Esophagus muscularis mucosa (tissue), 4 donors: ENCODE measurements at regions of chr19 and their contacts with region 1.

Region 1: DNA sequence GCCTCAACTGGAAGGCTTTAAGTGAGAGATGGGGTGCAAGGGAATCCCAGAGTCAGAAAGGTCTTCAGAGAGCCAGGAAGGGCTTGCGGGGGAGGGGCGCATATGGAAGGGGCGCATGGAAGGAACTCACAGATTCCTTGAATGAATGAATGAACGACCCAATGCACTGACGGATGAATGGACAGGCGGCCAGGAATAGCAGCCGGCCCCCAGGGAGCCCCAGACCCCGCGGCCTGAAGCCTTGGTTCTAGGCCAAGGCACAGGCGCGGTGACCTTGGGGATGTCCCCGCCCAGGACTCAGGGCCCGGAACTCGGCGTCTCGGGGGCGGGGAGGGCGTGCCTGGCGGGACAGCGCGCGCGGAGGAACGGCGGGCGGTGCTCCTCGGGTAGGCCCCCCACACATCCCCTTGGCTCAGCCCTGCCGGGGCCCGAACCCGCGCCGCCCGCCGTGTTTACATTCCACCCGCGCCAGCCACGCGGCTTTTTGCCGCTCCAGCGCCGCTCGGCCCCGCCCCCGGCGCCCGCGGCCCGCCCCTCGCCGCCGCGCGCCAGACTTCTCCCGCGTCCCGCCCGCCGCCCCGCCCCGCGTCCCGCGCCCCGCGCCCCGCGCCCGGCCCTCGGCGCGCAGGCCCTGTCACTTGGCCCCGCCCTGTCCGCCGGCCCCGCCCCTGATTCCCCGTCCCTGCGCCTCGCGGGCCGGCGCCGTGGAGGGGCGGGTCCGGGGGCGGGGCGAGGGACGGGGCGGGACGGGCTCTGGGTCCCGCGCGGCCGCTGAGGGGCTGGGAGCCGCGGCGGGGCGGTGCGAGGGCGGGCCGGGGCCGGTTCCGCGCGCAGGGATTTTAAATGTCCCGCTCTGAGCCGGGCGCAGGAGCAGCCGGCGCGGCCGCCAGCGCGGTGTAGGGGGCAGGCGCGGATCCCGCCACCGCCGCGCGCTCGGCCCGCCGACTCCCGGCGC is at the start of gene CCNE1:
- DNase-seq: peak; percentile 95
- H3K4me3 ChIP-seq: peak within 1 kb of the TSS; percentile 61 to 82 (median 70)
- H3K27ac ChIP-seq: peak within 1 kb of the TSS; percentile 65 to 80 (median 74)
- H3K4me1 ChIP-seq: peaks cover 0 to 21% (median 16%) of the 10 kb centered on the region in 4 donors
- H3K27me3 ChIP-seq: no peaks in the 10 kb centered on the region
- CTCF ChIP-seq: no peak
- EP300 ChIP-seq: no peak
- POLR2A ChIP-seq: no peak
- total RNA-seq, gene CCNE1: 0.42 to 4.0 (median 2.4) TPM

Region 2: DNA sequence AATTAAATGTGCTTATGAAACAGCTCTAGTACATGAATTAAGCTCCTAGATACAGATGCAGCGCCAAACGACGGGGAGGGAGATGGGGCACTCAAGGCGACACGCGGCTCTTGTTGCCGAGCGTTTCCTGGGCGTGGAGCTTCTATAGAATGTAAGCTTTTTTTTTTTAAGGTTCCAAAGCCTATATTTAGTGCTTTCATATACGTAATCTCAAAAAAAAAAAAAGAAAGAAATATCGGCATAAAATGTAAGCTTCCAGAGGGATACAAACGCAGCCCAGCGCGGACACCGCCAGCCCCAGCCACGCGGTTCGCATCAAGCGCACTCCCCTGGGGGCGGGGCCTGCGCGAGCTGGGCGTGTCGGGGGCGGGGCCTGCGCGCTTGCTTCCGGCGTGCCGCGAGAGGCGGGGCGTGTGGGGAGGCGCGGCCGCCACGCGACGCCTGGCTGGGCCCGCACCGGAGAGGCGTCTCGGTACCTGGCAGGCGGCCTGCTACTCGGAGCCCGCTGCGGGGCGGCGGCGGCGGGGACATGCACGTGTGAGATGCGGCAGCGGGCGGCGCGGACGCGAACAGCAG is 130.5 kb after region 1 on chr19 and contains the start of gene URI1:
- intact Hi-C with region 1: loop called (anchors 5 kb)
- DNase-seq: peak; percentile 95
- H3K4me3 ChIP-seq: peak within 1 kb of the TSS; percentile 71 to 91 (median 86)
- H3K27ac ChIP-seq: peak within 1 kb of the TSS; percentile 79 to 86 (median 81)
- H3K4me1 ChIP-seq: peaks cover 12 to 51% (median 42%) of the 10 kb centered on the region in 4 donors
- H3K27me3 ChIP-seq: no peaks in the 10 kb centered on the region
- CTCF ChIP-seq: peak in 1 of 3 experiments; percentile 9
- EP300 ChIP-seq: no peak
- POLR2A ChIP-seq: no peak
- total RNA-seq, gene URI1: 56.4 to 67.8 (median 59.8) TPM